Endothelial cell of umbilical vein (primary cell): ENCODE measurements at regions of chr13 and their contacts with region 1.

Region 1: GRCh38 chr13:111202745-111203144 is 87.6 kb downstream of the ARHGEF7 start:
- DNase-seq: peak; percentile 99
- H3K4me3 ChIP-seq: peak overlapping the region; percentile 65 to 97 (median 82)
- H3K27ac ChIP-seq: peak overlapping the region; percentile 100
- H3K4me1 ChIP-seq: peaks cover 28% of the 10 kb centered on the region
- H3K27me3 ChIP-seq: no peaks in the 10 kb centered on the region
- CTCF ChIP-seq: no peak
- POLR2A ChIP-seq: peak; percentile 80

Region 2: GRCh38 chr13:110705826-110706569 is 496.7 kb before region 1 on chr13 and contains the start of gene CARS2:
- CTCF ChIA-PET with region 1: no interaction called
- POLR2A ChIA-PET with region 1: no interaction called
- dilution Hi-C with region 1: no loop called
- intact Hi-C with region 1: loop called (anchors 2 kb)
- DNase-seq: peak; percentile 94
- H3K4me3 ChIP-seq: peak within 1 kb of the TSS; percentile 88 to 93 (median 91)
- H3K27ac ChIP-seq: peak within 1 kb of the TSS; percentile 44
- H3K4me1 ChIP-seq: peaks cover 12% of the 10 kb centered on the region
- H3K27me3 ChIP-seq: no peaks in the 10 kb centered on the region
- CTCF ChIP-seq: peak in 1 of 2 donors; percentile 13
- POLR2A ChIP-seq: peak; percentile 86
- total RNA-seq, gene CARS2: 44.1 and 51.2 TPM in 2 replicates

Region 3: GRCh38 chr13:110869805-110870706 is 332.7 kb before region 1 on chr13:
- CTCF ChIA-PET with region 1: no interaction called
- POLR2A ChIA-PET with region 1: no interaction called
- dilution Hi-C with region 1: no loop called
- intact Hi-C with region 1: loop called (anchors 2 kb)
- DNase-seq: peak; percentile 99
- H3K4me3 ChIP-seq: peak overlapping the region in 2 of 3 experiments; percentile 3 to 45
- H3K27ac ChIP-seq: peak overlapping the region; percentile 86
- H3K4me1 ChIP-seq: peaks cover 17% of the 10 kb centered on the region
- H3K27me3 ChIP-seq: peaks cover 0 to 2% of the 10 kb centered on the region in 2 experiments
- CTCF ChIP-seq: peak in 1 of 2 donors; percentile 6
- POLR2A ChIP-seq: no peak

Region 4: DNA sequence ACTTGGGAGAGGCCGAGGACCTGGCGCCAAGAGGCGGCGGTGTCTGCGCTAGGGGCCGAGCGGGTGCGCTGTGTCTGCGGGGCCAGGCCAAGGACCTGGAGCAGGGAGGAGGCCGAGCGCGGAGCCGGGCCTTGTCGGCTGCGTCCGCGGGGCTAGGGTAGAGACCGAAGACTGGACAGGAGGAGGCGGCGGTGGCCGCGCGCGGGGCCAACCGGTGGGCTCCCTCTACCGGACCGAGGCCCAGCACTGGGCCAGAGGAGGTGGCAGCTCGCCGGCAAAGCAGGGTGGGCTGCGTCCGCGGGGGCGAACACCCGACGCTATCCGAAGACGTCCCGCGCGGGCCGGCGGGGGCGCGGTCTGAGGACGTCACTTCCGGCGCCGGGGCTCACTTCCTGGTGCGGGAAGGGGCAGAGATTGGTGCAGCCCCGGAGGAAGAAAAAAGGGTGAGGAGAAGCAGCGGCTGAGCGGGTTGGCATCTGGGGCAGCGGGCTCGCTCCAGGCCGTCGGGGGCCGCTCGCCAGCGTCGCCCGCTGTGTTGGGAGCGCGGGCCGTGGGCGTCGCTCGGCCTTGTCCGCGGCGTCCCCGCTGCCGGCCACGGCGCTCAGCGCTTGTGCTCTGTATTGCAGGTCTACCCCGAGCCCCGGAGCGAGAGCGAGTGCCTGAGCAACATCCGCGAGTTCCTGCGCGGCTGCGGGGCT is 49.3 kb before region 1 on chr13:
- CTCF ChIA-PET with region 1: interaction called, 10 read pairs
- POLR2A ChIA-PET with region 1: interaction called, 3 read pairs
- dilution Hi-C with region 1: no loop called
- intact Hi-C with region 1: loop called (anchors 1 kb)
- DNase-seq: peak; percentile 96
- H3K4me3 ChIP-seq: peak overlapping the region; percentile 80 to 97 (median 90)
- H3K27ac ChIP-seq: peak overlapping the region; percentile 71
- H3K4me1 ChIP-seq: peaks cover 15% of the 10 kb centered on the region
- H3K27me3 ChIP-seq: peaks cover 6 to 17% of the 10 kb centered on the region in 2 experiments
- CTCF ChIP-seq: peak; percentile 21 to 31
- POLR2A ChIP-seq: peak; percentile 52

Region 5: GRCh38 chr13:111177081-111177711 is 25.5 kb before region 1 on chr13:
- CTCF ChIA-PET with region 1: interaction called, 4 read pairs
- POLR2A ChIA-PET with region 1: interaction called, 5 read pairs
- dilution Hi-C with region 1: no loop called
- intact Hi-C with region 1: loop called (anchors 1 kb)
- DNase-seq: peak; percentile 95
- H3K4me3 ChIP-seq: no peak overlapping the region
- H3K27ac ChIP-seq: peak overlapping the region; percentile 98
- H3K4me1 ChIP-seq: peaks cover 25% of the 10 kb centered on the region
- H3K27me3 ChIP-seq: no peaks in the 10 kb centered on the region
- CTCF ChIP-seq: no peak
- POLR2A ChIP-seq: peak; percentile 35

Region 6: GRCh38 chr13:111184458-111185401 is 18.0 kb before region 1 on chr13:
- CTCF ChIA-PET with region 1: interaction called, 14 read pairs
- POLR2A ChIA-PET with region 1: interaction called, 3 read pairs
- dilution Hi-C with region 1: no loop called
- intact Hi-C with region 1: no loop called
- DNase-seq: no peak
- H3K4me3 ChIP-seq: no peak overlapping the region
- H3K27ac ChIP-seq: no peak overlapping the region
- H3K4me1 ChIP-seq: peaks cover 9% of the 10 kb centered on the region
- H3K27me3 ChIP-seq: no peaks in the 10 kb centered on the region
- CTCF ChIP-seq: no peak
- POLR2A ChIP-seq: no peak